Mammary epithelial cell (primary cell): ENCODE measurements at regions of chr21 and their contacts with region 1.

Region 1: GRCh38 chr21:31580866-31581276 is 78.6 kb upstream of the SOD1 start:
- DNase-seq: peak; percentile 37
- H3K4me3 ChIP-seq: no peak overlapping the region
- H3K27ac ChIP-seq: no peak overlapping the region
- H3K4me1 ChIP-seq: no peaks in the 10 kb centered on the region
- H3K27me3 ChIP-seq: peaks cover 1% of the 10 kb centered on the region
- CTCF ChIP-seq: peak; percentile 89 to 92

Region 2: DNA sequence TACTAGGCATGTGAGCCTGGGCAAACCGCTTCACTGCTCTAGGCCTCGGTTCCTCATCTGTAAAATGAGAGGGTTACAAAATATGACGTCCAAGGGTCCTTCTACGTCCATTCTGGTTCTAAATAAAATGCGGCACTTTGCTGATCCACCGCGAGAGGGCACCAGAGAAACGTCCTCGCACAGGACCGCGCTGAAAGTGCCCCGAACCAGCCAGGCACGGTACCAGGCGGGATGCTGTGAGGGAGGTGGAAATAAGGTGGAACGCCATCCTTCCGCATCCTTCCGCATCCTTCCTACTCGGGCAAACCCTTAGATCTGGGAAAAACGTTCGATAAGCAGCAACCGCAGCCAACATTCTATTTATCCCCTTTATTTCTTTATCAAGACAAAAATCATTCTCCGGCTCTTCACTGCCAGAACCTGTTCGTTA is 482.3 kb before region 1 on chr21:
- CTCF ChIA-PET with region 1: no interaction called
- dilution Hi-C with region 1: loop called (anchors 25 kb)
- in situ Hi-C with region 1: no loop called
- intact Hi-C with region 1: loop called (anchors 5 kb)
- DNase-seq: peak; percentile 24
- H3K4me3 ChIP-seq: no peak overlapping the region
- H3K27ac ChIP-seq: no peak overlapping the region
- H3K4me1 ChIP-seq: no peaks in the 10 kb centered on the region
- H3K27me3 ChIP-seq: no peaks in the 10 kb centered on the region
- CTCF ChIP-seq: peak; percentile 89 to 91

Region 3: GRCh38 chr21:31198575-31198974 is 382.3 kb before region 1 on chr21:
- CTCF ChIA-PET with region 1: interaction called, 11 read pairs
- dilution Hi-C with region 1: no loop called
- in situ Hi-C with region 1: loop called (anchors 5 kb)
- intact Hi-C with region 1: loop called (anchors 1 kb)
- DNase-seq: peak; percentile 38
- H3K4me3 ChIP-seq: no peak overlapping the region
- H3K27ac ChIP-seq: no peak overlapping the region
- H3K4me1 ChIP-seq: peaks cover 4% of the 10 kb centered on the region
- H3K27me3 ChIP-seq: no peaks in the 10 kb centered on the region
- CTCF ChIP-seq: peak; percentile 48 to 56

Region 4: GRCh38 chr21:31213795-31214194 is 367.1 kb before region 1 on chr21:
- CTCF ChIA-PET with region 1: interaction called, 3 read pairs
- dilution Hi-C with region 1: no loop called
- in situ Hi-C with region 1: no loop called
- intact Hi-C with region 1: loop called (anchors 1 kb)
- DNase-seq: no peak
- H3K4me3 ChIP-seq: no peak overlapping the region
- H3K27ac ChIP-seq: no peak overlapping the region
- H3K4me1 ChIP-seq: no peaks in the 10 kb centered on the region
- H3K27me3 ChIP-seq: no peaks in the 10 kb centered on the region
- CTCF ChIP-seq: peak in 1 of 2 donors; percentile 27

Region 5: GRCh38 chr21:31343680-31344480 is 237.0 kb before region 1 on chr21 and contains the start of gene TIAM1:
- CTCF ChIA-PET with region 1: interaction called, 14 read pairs
- dilution Hi-C with region 1: no loop called
- in situ Hi-C with region 1: no loop called
- intact Hi-C with region 1: loop called (anchors 1 kb)
- DNase-seq: peak; percentile 89
- H3K4me3 ChIP-seq: peak within 1 kb of the TSS; percentile 75 to 81 (median 77)
- H3K27ac ChIP-seq: peak within 1 kb of the TSS; percentile 58
- H3K4me1 ChIP-seq: peaks cover 10% of the 10 kb centered on the region
- H3K27me3 ChIP-seq: no peaks in the 10 kb centered on the region
- CTCF ChIP-seq: no peak
- total RNA-seq, gene TIAM1: 14.7 to 27.7 TPM

Region 6: DNA sequence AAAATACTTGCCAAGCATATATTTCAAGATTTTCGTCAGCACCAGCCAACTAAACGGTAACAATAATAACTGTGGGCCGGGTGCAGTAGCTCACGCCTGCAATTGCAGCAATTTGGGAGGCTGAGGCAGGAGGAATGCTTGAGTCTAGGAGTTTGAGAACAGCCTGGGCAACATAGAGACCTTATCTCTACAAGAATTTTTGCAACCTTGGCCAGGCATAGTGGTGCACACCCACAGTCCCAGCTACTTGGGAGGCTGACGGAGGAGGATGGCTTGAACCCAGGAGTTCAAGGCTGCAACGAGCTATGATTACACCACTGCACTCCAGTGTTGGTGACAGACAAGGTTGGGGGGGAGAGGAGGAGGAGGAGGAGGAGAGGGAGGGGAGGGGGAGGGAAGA is 91.9 kb before region 1 on chr21:
- CTCF ChIA-PET with region 1: no interaction called
- dilution Hi-C with region 1: loop called (anchors 5 kb)
- in situ Hi-C with region 1: no loop called
- intact Hi-C with region 1: no loop called
- DNase-seq: no peak
- H3K4me3 ChIP-seq: no peak overlapping the region
- H3K27ac ChIP-seq: no peak overlapping the region
- H3K4me1 ChIP-seq: no peaks in the 10 kb centered on the region
- H3K27me3 ChIP-seq: no peaks in the 10 kb centered on the region
- CTCF ChIP-seq: no peak

Region 7: GRCh38 chr21:31604591-31605190 is 23.8 kb after region 1 on chr21:
- CTCF ChIA-PET with region 1: no interaction called
- dilution Hi-C with region 1: no loop called
- in situ Hi-C with region 1: no loop called
- intact Hi-C with region 1: no loop called
- DNase-seq: peak; percentile 41
- H3K4me3 ChIP-seq: no peak overlapping the region
- H3K27ac ChIP-seq: no peak overlapping the region
- H3K4me1 ChIP-seq: peaks cover 7% of the 10 kb centered on the region
- H3K27me3 ChIP-seq: no peaks in the 10 kb centered on the region
- CTCF ChIP-seq: peak; percentile 78 to 91